Aorta (tissue), 5 donors: ENCODE measurements at regions of chr2 and their contacts with region 1.

Region 1: DNA sequence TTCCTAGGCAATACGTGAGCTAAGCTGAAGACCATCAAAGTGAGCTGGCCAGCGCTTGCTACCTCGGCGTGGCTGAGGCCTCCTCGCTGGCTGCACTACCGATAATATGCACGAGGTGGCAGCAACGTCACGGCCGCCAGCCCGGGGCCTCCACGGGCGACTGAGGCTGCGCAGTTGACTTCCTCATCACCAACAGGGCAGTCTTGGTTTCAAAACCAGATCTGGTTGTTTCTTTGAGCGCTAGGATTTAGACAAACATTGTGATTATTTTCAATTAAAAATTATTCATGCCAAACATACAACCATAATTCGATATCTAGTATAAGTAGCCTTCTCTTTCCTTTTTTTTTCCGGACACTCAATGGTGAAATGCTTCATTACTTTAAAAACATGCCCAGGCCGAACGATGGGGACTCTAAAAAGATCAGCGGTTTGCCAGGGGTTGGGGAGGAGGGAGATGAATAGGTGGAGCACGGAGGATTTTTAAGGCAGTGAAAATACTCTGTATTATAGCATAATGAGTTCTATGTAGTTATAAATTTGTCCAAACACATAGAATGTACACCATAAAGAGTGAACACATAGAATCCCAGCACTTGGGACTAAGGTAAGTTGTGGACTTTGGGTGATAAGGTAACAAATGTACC is 52.0 kb downstream of the CYBRD1 start:
- DNase-seq: peak; percentile 87 to 95
- ATAC-seq: peak; percentile 95
- H3K4me3 ChIP-seq: no peak overlapping the region
- H3K27ac ChIP-seq: no peak overlapping the region
- H3K4me1 ChIP-seq: no peaks in the 10 kb centered on the region
- H3K27me3 ChIP-seq: no peaks in the 10 kb centered on the region

Region 2: DNA sequence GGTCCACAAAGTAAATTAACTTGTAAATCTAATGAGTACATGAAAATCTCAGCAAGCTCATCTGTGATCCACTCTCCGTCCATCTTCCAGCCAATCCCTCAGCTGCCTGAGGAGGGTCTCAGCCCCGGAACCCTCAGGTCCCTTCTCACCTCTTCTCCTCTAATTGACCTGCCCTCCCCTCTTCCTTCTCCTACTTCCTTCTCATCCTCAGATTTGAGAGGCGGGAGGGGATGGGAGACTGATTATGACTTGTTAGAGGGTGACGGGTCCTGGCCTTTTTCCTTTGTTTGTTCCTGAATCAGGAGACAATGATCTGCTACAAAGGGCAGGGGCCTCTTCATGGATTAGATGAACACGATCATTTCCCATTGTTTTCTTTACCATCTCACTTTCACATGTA is 28.1 kb after region 1 on chr2:
- intact Hi-C with region 1: no loop called
- DNase-seq: no peak
- ATAC-seq: no peak
- H3K4me3 ChIP-seq: no peak overlapping the region
- H3K27ac ChIP-seq: no peak overlapping the region
- H3K4me1 ChIP-seq: no peaks in the 10 kb centered on the region
- H3K27me3 ChIP-seq: no peaks in the 10 kb centered on the region

Region 3: DNA sequence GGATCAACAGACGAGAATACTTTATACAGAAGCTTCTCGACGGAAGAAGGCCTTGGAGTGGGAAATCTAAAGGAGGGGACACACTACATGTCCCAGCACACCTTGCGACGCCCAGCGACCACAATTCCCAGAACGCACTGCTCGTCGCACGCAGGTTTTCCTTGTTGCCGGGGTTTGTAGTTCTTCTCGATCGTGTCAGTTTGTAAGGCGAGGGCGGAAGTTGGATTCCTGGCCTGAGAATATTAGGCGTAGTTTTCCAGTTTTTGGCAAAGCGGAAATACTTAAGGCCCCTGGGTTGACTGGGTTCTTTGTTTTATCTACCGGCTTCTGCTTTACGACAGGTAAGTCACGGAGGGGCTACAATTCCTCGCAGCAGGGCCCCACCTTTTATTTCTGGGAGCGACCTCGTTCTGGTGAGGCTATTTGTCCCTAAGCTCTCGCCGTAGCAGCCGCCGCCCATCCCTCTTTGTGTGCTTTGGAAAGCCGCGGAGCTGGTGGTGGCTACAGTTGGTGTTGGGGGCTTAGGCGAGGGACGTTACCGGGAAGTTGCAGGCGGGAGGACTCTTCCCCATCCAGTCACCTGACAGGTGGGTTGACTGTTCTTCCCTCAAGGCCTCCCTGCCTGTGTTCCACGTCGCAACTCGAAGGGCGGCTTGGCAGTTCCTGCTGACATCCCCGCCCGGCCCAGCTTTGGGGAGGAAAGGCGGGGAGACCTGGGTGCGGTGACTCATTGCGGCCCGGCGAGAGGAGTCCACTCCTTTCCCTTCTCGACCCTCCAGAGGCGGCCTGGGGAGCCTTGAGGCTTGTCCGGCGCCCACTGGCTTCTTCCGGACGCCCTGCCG is 113.2 kb after region 1 on chr2 and contains the start of gene DYNC1I2:
- intact Hi-C with region 1: loop called in 1 of 2 experiments (anchors 10 kb)
- DNase-seq: peak; percentile 94 to 95
- ATAC-seq: peak; percentile 97
- H3K4me3 ChIP-seq: peak within 1 kb of the TSS; percentile 54 to 87
- H3K27ac ChIP-seq: peak within 1 kb of the TSS; percentile 17 to 59
- H3K4me1 ChIP-seq: no peaks in the 10 kb centered on the region
- H3K27me3 ChIP-seq: no peaks in the 10 kb centered on the region
- total RNA-seq, gene DYNC1I2: 91.1 to 103 TPM

Region 4: DNA sequence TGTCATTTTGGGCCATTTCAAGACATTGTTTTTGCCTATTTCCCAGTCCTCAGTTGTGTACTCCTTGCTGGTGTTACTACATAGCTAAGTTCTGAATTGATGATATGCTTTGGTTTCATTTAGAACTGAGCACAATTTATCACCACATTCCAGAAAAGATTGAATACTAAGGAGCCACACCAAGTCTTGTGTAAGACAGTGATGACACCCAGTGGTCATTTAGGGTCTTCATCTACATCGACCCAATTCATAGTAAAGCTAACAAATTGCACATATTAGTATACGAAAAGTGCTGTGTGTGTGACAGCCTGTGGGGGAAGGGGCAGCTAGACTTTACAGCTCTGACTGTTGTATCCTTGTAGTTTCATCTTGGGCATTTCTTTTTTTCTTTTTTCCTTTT is 539.3 kb after region 1 on chr2:
- intact Hi-C with region 1: loop called in 1 of 2 experiments (anchors 5 kb)
- DNase-seq: no peak
- ATAC-seq: no peak
- H3K4me3 ChIP-seq: no peak overlapping the region
- H3K27ac ChIP-seq: no peak overlapping the region
- H3K4me1 ChIP-seq: no peaks in the 10 kb centered on the region
- H3K27me3 ChIP-seq: no peaks in the 10 kb centered on the region

Region 5: DNA sequence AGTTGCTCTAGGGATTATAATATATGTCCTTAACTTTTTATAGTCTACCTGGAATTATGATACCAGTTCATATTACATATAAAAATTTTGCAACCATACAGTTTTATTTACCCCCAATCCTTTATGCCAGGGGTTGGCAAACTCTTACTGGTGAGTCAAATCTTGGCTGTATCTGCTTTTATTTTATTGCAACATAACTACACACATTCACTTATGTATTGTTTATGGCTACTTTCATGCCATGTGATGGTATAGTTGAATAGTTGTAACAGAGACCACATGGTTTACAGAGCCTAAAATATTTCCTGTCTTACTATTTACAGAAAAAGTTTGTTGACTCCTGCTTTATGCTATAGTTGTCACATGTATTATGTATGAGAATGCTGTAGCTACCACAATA is 554.2 kb after region 1 on chr2:
- intact Hi-C with region 1: loop called in 1 of 2 experiments (anchors 10 kb)
- DNase-seq: no peak
- ATAC-seq: no peak
- H3K4me3 ChIP-seq: no peak overlapping the region
- H3K27ac ChIP-seq: no peak overlapping the region
- H3K4me1 ChIP-seq: no peaks in the 10 kb centered on the region
- H3K27me3 ChIP-seq: peaks cover 0 to 1% of the 10 kb centered on the region in 2 donors

Region 6: GRCh38 chr2:172465417-172466334 is 891.4 kb after region 1 on chr2:
- intact Hi-C with region 1: loop called in 1 of 2 experiments (anchors 10 kb)
- DNase-seq: peak; percentile 67 to 82
- ATAC-seq: peak; percentile 90
- H3K4me3 ChIP-seq: no peak overlapping the region
- H3K27ac ChIP-seq: no peak overlapping the region
- H3K4me1 ChIP-seq: no peaks in the 10 kb centered on the region
- H3K27me3 ChIP-seq: no peaks in the 10 kb centered on the region